CD4-positive, alpha-beta T cell (primary cell): ENCODE measurements at regions of chr6 and their contacts with region 1.

Region 1: GRCh38 chr6:5471044-5471443 is 209.7 kb downstream of the FARS2 start:
- DNase-seq: peak; percentile 35 to 72 (median 50)
- ATAC-seq: peak; percentile 68
- H3K4me3 ChIP-seq: no peak overlapping the region
- H3K4me3 Mint-ChIP-seq: no peak overlapping the region
- H3K27ac ChIP-seq: no peak overlapping the region
- H3K27ac Mint-ChIP-seq: no peak overlapping the region
- H3K4me1 ChIP-seq: no peaks in the 10 kb centered on the region
- H3K4me1 Mint-ChIP-seq: peaks cover 6% of the 10 kb centered on the region
- H3K27me3 ChIP-seq: no peaks in the 10 kb centered on the region
- H3K27me3 Mint-ChIP-seq: no peaks in the 10 kb centered on the region
- CTCF ChIP-seq: peak; percentile 65

Region 2: DNA sequence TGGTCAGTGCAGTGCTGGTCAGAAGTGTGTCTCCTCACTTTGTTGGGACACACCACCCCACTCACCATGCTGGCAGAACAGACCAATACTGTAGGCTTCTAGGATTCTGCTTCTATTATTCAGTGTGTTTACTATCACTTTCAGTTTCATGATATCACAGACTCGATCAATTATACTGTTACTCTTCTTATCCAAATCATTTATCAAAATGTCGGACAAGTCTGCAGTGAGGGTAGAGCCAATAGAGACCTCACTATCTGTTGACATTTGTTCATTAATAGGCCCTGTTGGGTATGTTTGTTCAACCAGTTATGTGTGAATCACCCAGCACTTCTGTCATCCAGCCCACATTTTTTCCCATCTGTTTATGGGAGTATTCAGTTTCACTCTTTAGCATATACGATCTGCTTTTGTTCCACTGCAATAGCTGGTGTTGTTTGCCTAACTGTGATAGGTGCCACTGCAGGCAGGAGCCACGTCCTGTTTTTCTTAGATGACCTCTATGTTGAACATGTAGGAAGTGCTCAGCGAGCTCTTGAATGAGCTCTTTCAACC is 395.6 kb after region 1 on chr6:
- CTCF ChIA-PET with region 1: no interaction called
- POLR2A ChIA-PET with region 1: interaction called, 4 read pairs
- intact Hi-C with region 1: loop called in 1 of 2 experiments (anchors 10 kb)
- DNase-seq: peak in 7 of 14 experiments; percentile 7 to 65 (median 31)
- ATAC-seq: peak; percentile 69
- H3K4me3 ChIP-seq: peak overlapping the region; percentile 47
- H3K4me3 Mint-ChIP-seq: peak overlapping the region; percentile 83
- H3K27ac ChIP-seq: peak overlapping the region; percentile 54 to 86
- H3K27ac Mint-ChIP-seq: peak overlapping the region; percentile 92
- H3K4me1 ChIP-seq: peaks cover 29% of the 10 kb centered on the region
- H3K4me1 Mint-ChIP-seq: peaks cover 57% of the 10 kb centered on the region
- H3K27me3 ChIP-seq: no peaks in the 10 kb centered on the region
- H3K27me3 Mint-ChIP-seq: no peaks in the 10 kb centered on the region
- CTCF ChIP-seq: no peak

Region 3: DNA sequence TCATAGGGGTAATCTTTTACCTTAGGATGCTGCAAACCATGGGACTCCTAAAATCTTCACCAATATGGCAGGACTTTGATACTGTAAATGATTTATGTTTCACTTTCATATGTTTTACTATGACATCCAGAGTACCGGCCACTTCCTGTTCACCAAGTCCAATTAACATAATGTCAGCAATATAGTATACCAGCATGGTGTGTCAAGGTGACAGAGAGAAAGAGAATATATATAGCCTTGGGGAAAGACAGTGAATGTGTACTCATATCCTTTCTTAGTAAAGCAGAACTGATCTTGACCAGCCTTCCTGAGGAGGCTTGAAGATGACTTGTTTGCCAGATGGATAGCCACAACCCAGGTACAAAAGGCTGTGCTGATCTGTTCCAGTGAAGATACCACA is 407.7 kb after region 1 on chr6:
- CTCF ChIA-PET with region 1: no interaction called
- POLR2A ChIA-PET with region 1: no interaction called
- intact Hi-C with region 1: loop called (anchors 5 to 10 kb)
- DNase-seq: peak in 1 of 14 experiments; percentile 22
- ATAC-seq: no peak
- H3K4me3 ChIP-seq: no peak overlapping the region
- H3K4me3 Mint-ChIP-seq: no peak overlapping the region
- H3K27ac ChIP-seq: no peak overlapping the region
- H3K27ac Mint-ChIP-seq: no peak overlapping the region
- H3K4me1 ChIP-seq: no peaks in the 10 kb centered on the region
- H3K4me1 Mint-ChIP-seq: peaks cover 12% of the 10 kb centered on the region
- H3K27me3 ChIP-seq: no peaks in the 10 kb centered on the region
- H3K27me3 Mint-ChIP-seq: no peaks in the 10 kb centered on the region
- CTCF ChIP-seq: no peak

Region 4: GRCh38 chr6:5995949-5996713 is 525.1 kb after region 1 on chr6:
- CTCF ChIA-PET with region 1: no interaction called
- POLR2A ChIA-PET with region 1: no interaction called
- intact Hi-C with region 1: loop called in 1 of 2 experiments (anchors 5 kb)
- DNase-seq: peak in 2 of 14 experiments; percentile 30 to 32
- ATAC-seq: no peak
- H3K4me3 ChIP-seq: peak overlapping the region; percentile 56
- H3K4me3 Mint-ChIP-seq: peak overlapping the region; percentile 96
- H3K27ac ChIP-seq: no peak overlapping the region
- H3K27ac Mint-ChIP-seq: no peak overlapping the region
- H3K4me1 ChIP-seq: peaks cover 59% of the 10 kb centered on the region
- H3K4me1 Mint-ChIP-seq: peaks cover 72% of the 10 kb centered on the region
- H3K27me3 ChIP-seq: peaks cover 85 to 94% of the 10 kb centered on the region in 2 experiments
- H3K27me3 Mint-ChIP-seq: peaks cover 98% of the 10 kb centered on the region
- CTCF ChIP-seq: no peak

Region 5: GRCh38 chr6:6008648-6009421 is 537.8 kb after region 1 on chr6:
- CTCF ChIA-PET with region 1: no interaction called
- POLR2A ChIA-PET with region 1: no interaction called
- intact Hi-C with region 1: loop called in 1 of 2 experiments (anchors 5 kb)
- DNase-seq: peak in 5 of 14 experiments; percentile 32 to 63 (median 54)
- ATAC-seq: peak; percentile 54
- H3K4me3 ChIP-seq: peak overlapping the region; percentile 47
- H3K4me3 Mint-ChIP-seq: peak overlapping the region; percentile 69
- H3K27ac ChIP-seq: no peak overlapping the region
- H3K27ac Mint-ChIP-seq: no peak overlapping the region
- H3K4me1 ChIP-seq: peaks cover 47% of the 10 kb centered on the region
- H3K4me1 Mint-ChIP-seq: peaks cover 45% of the 10 kb centered on the region
- H3K27me3 ChIP-seq: peaks cover 54 to 71% of the 10 kb centered on the region in 2 experiments
- H3K27me3 Mint-ChIP-seq: peaks cover 80% of the 10 kb centered on the region
- CTCF ChIP-seq: no peak

Region 6: GRCh38 chr6:6057424-6058053 is 586.5 kb after region 1 on chr6:
- CTCF ChIA-PET with region 1: no interaction called
- POLR2A ChIA-PET with region 1: no interaction called
- intact Hi-C with region 1: loop called in 1 of 2 experiments (anchors 2 kb)
- DNase-seq: peak in 3 of 14 experiments; percentile 31 to 54 (median 41)
- ATAC-seq: no peak
- H3K4me3 ChIP-seq: no peak overlapping the region
- H3K4me3 Mint-ChIP-seq: no peak overlapping the region
- H3K27ac ChIP-seq: no peak overlapping the region
- H3K27ac Mint-ChIP-seq: no peak overlapping the region
- H3K4me1 ChIP-seq: no peaks in the 10 kb centered on the region
- H3K4me1 Mint-ChIP-seq: no peaks in the 10 kb centered on the region
- H3K27me3 ChIP-seq: peaks cover 5 to 34% of the 10 kb centered on the region in 2 experiments
- H3K27me3 Mint-ChIP-seq: peaks cover 69% of the 10 kb centered on the region
- CTCF ChIP-seq: peak; percentile 60

Region 7: GRCh38 chr6:6547110-6547879 is 1076.3 kb after region 1 on chr6:
- CTCF ChIA-PET with region 1: interaction called, 15 read pairs
- POLR2A ChIA-PET with region 1: no interaction called
- intact Hi-C with region 1: loop called in 1 of 2 experiments (anchors 1 kb)
- DNase-seq: peak; percentile 70 to 89 (median 77)
- ATAC-seq: peak; percentile 90
- H3K4me3 ChIP-seq: peak overlapping the region; percentile 51
- H3K4me3 Mint-ChIP-seq: peak overlapping the region; percentile 59
- H3K27ac ChIP-seq: no peak overlapping the region
- H3K27ac Mint-ChIP-seq: no peak overlapping the region
- H3K4me1 ChIP-seq: peaks cover 13% of the 10 kb centered on the region
- H3K4me1 Mint-ChIP-seq: peaks cover 5% of the 10 kb centered on the region
- H3K27me3 ChIP-seq: peaks cover 25 to 34% of the 10 kb centered on the region in 2 experiments
- H3K27me3 Mint-ChIP-seq: peaks cover 54% of the 10 kb centered on the region
- CTCF ChIP-seq: peak; percentile 94